Left colon (tissue), 2 donors: ENCODE measurements at regions of chr1 and their contacts with region 1.

Region 1: GRCh38 chr1:236253918-236254637 is 27.7 kb downstream of the ERO1B start:
- DNase-seq: no peak
- ATAC-seq: no peak

Region 2: GRCh38 chr1:236120721-236121153 is 133.3 kb before region 1 on chr1:
- intact Hi-C with region 1: no loop called
- DNase-seq: no peak
- ATAC-seq: no peak

Region 3: GRCh38 chr1:236311040-236311439 is 57.0 kb after region 1 on chr1:
- intact Hi-C with region 1: loop called in 1 of 2 experiments (anchors 10 kb)
- DNase-seq: no peak
- ATAC-seq: no peak